ENCODE measurements at regions of chr3 and their contacts with region 1.

Region 1: DNA sequence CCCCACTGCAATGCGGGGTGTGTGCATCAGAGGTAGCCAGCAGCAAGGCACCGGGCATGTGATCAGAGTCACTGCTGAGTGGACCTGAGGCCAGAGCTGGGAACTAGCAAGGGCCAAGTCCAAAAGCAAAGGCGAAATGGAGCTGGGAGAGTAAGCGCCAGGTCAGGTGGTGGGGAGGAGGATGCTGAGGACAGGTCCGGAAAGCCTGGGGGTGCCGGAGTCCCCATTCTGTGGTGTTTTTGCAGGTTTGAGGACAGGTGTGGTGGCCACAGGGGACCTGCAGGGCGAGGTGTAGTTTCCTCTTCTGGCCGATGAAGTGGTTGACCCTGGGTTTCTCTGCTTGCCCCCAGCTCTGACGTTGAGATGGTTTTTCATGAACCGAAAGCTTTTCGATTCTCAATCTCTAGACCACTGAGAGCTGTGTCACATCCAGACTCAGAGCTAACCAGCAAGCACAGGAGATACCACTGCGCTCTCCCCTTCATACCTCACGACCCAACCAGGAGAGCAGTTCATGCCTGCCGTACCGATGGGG is 35.0 kb upstream of the HES1 start:
- DNase-seq: no peak
- H3K4me3 ChIP-seq: no peak overlapping the region
- H3K4me3 Mint-ChIP-seq: peak overlapping the region; percentile 43
- H3K27ac Mint-ChIP-seq: peak overlapping the region; percentile 46
- H3K4me1 ChIP-seq: peaks cover 70% of the 10 kb centered on the region
- H3K4me1 Mint-ChIP-seq: peaks cover 67% of the 10 kb centered on the region
- H3K27me3 ChIP-seq: no peaks in the 10 kb centered on the region
- H3K27me3 Mint-ChIP-seq: no peaks in the 10 kb centered on the region
- CTCF ChIP-seq: no peak

Region 2: DNA sequence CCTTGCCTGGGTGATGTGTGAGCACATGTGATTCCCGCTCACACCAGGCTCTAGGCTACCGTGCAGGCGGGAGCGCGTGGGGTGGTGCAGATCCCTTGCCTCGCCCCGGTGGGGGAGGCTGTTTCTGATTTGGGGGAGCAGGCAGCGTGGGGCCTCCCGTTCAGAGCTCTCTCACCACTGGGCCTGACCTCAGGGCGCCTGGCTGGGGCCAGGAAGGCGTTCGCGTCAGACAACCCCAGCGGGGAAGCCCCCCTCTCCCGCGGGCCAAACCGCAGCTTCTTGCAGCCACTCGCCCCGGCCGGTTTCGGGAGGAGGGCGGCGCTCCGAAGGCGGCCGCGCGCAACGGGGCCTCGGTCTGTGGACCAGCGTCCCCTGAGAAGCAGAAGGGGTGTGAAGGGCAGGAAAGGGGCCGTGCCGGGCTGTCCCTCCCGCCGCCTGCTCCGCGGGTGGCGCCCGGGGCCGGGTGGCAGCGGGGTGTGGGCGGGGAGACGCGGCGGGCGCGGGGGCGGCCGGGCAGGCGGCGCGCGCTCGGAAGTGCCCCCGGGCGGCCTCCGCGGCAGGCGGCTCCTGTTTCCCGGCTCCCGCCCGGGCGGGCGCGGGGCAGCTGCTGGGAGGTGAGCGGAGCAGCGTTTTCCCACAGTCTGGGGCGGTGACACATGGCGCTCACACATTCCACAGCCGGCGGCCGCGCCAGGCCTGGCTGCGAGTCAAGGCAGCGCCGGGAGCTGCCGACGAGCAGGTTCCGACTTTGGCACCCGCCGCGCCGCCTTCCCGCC is 30.1 kb before region 1 on chr3:
- CTCF ChIA-PET with region 1: no interaction called
- POLR2A ChIA-PET with region 1: interaction called, 5 read pairs
- intact Hi-C with region 1: loop called (anchors 1 kb)
- DNase-seq: peak; percentile 87 to 89
- H3K4me3 ChIP-seq: peak overlapping the region; percentile 52
- H3K4me3 Mint-ChIP-seq: peak overlapping the region; percentile 88
- H3K27ac Mint-ChIP-seq: peak overlapping the region; percentile 94
- H3K4me1 ChIP-seq: peaks cover 44% of the 10 kb centered on the region
- H3K4me1 Mint-ChIP-seq: peaks cover 33% of the 10 kb centered on the region
- H3K27me3 ChIP-seq: no peaks in the 10 kb centered on the region
- H3K27me3 Mint-ChIP-seq: no peaks in the 10 kb centered on the region
- CTCF ChIP-seq: no peak

Region 3: GRCh38 chr3:194086388-194087075 is 14.4 kb before region 1 on chr3:
- CTCF ChIA-PET with region 1: no interaction called
- POLR2A ChIA-PET with region 1: interaction called, 5 read pairs
- intact Hi-C with region 1: loop called (anchors 2 kb)
- DNase-seq: no peak
- H3K4me3 ChIP-seq: no peak overlapping the region
- H3K4me3 Mint-ChIP-seq: no peak overlapping the region
- H3K27ac Mint-ChIP-seq: peak overlapping the region; percentile 79
- H3K4me1 ChIP-seq: peaks cover 31% of the 10 kb centered on the region
- H3K4me1 Mint-ChIP-seq: peaks cover 35% of the 10 kb centered on the region
- H3K27me3 ChIP-seq: no peaks in the 10 kb centered on the region
- H3K27me3 Mint-ChIP-seq: no peaks in the 10 kb centered on the region
- CTCF ChIP-seq: no peak

Region 4: GRCh38 chr3:194121891-194122631 is 21.1 kb after region 1 on chr3:
- CTCF ChIA-PET with region 1: no interaction called
- POLR2A ChIA-PET with region 1: interaction called, 13 read pairs
- intact Hi-C with region 1: loop called (anchors 1 kb)
- DNase-seq: peak; percentile 70 to 72
- H3K4me3 ChIP-seq: no peak overlapping the region
- H3K4me3 Mint-ChIP-seq: peak overlapping the region; percentile 56
- H3K27ac Mint-ChIP-seq: peak overlapping the region; percentile 89
- H3K4me1 ChIP-seq: peaks cover 82% of the 10 kb centered on the region
- H3K4me1 Mint-ChIP-seq: peaks cover 72% of the 10 kb centered on the region
- H3K27me3 ChIP-seq: no peaks in the 10 kb centered on the region
- H3K27me3 Mint-ChIP-seq: no peaks in the 10 kb centered on the region
- CTCF ChIP-seq: no peak

Measured in Caco-2 (cell line).